Aorta (tissue), 5 donors: ENCODE measurements at regions of chr7 and their contacts with region 1.

Region 1: GRCh38 chr7:75667938-75668337 is 70.8 kb downstream of the HIP1 start:
- DNase-seq: peak in 1 of 2 donors; percentile 42
- ATAC-seq: no peak
- H3K4me3 ChIP-seq: no peak overlapping the region
- H3K27ac ChIP-seq: no peak overlapping the region
- H3K4me1 ChIP-seq: peaks cover 1 to 3% of the 10 kb centered on the region in 2 donors
- H3K27me3 ChIP-seq: no peaks in the 10 kb centered on the region

Region 2: GRCh38 chr7:75711656-75712514 is 43.9 kb after region 1 on chr7:
- intact Hi-C with region 1: loop called in 1 of 2 experiments (anchors 1 kb)
- DNase-seq: peak; percentile 47 to 55
- ATAC-seq: peak; percentile 82
- H3K4me3 ChIP-seq: peak overlapping the region in 1 of 2 donors; percentile 13
- H3K27ac ChIP-seq: peak overlapping the region; percentile 94 to 100
- H3K4me1 ChIP-seq: peaks cover 3% of the 10 kb centered on the region in 2 donors
- H3K27me3 ChIP-seq: no peaks in the 10 kb centered on the region